SK-N-SH (cell line): ENCODE measurements at regions of chr2 and their contacts with region 1.

Region 1: DNA sequence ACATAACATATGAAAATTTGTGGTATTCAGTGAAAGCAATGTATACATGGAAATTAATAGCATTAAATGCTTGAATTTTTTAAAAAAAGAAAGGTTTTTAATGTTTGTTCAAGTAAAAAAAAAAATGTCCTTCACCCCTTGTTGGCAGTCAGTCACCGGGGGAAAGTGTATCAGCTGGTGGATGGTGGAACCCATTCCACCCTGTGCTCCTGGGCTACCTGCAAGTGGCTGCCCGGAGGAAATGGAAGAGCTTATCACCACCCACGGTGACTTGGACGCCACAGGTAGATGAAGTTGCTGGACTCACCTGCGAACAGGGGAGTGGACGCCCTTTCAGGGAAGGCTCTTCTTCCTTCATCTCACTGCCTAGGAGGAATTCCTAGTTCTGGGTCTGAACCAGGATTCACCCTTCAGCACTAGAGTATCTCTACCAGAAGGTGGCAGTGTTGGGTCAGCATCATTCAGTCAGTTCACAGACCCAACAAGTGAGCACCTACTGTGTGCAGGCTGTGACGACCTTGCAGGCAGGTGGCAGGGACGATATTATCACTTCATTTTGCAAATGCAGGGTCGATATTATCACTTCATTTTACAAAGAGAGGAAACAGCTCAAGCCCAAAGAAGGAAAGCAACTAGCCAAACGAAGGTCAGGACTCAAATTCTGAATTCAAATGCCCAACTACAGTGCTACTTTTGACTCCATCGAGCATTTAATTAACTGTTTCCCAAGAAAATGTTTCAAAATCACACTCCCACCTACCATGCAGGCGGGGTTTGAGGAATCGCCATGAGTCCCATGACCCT is 35.8 kb downstream of the CIB4 start:
- DNase-seq: peak; percentile 78
- H3K4me3 ChIP-seq: no peak overlapping the region; a peak in 1 of 4 replicates
- H3K27ac ChIP-seq: no peak overlapping the region
- H3K4me1 ChIP-seq: no peaks in the 10 kb centered on the region; a peak in 1 of 4 replicates
- H3K27me3 ChIP-seq: peaks cover 21% of the 10 kb centered on the region
- CTCF ChIP-seq: peak; percentile 94
- EP300 ChIP-seq: no peak
- RAD21 ChIP-seq: peak; percentile 99

Region 2: GRCh38 chr2:26453421-26454329 is 151.7 kb before region 1 on chr2:
- CTCF ChIA-PET with region 1: no interaction called
- POLR2A ChIA-PET with region 1: no interaction called
- DNase-seq: no peak
- H3K4me3 ChIP-seq: no peak overlapping the region
- H3K27ac ChIP-seq: no peak overlapping the region
- H3K4me1 ChIP-seq: no peaks in the 10 kb centered on the region; a peak in 1 of 4 replicates
- H3K27me3 ChIP-seq: peaks cover 10% of the 10 kb centered on the region
- CTCF ChIP-seq: no peak
- EP300 ChIP-seq: no peak
- RAD21 ChIP-seq: no peak

Region 3: DNA sequence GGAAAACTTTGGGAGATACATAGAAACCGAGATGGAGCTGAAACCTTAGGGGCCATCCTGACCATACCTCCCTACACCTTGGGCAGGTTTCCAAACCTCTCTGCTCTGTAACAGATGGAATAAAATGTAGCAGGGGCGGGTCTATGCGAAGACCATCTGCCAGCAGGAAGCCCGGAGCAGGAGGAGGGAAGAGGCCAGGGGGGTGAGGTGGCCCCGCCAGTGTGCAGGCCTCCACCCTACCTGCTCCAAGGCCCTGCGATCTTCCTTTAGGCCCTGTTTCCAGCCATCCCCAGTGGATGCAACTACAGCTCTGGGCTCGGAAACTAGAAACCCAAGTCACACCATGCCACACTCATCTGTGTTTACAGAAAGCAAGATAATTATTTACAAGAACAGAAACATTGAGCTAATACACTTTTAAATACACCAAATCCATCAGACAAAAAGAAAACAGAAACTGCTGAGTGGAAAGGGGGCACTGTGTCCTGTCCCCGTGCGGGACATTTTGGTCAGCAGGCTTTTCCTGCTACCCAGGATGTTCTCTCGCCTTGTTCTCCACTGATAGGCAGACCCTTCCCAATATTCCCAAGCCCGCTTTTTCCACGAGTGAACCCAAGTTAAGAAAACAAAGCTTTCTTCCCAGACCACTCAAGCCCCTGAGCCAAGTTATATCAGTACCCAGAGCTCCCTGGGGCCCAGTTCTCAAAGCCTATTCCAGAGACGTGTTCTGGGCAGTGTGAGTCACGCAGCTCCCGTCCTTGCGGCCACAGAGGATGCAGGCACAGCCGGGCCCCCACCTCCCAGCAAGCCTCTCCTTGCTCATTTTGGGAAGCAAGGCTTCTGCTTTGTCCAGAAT is 18.4 kb after region 1 on chr2:
- CTCF ChIA-PET with region 1: interaction called, 81 read pairs
- POLR2A ChIA-PET with region 1: no interaction called
- DNase-seq: peak; percentile 41
- H3K4me3 ChIP-seq: no peak overlapping the region
- H3K27ac ChIP-seq: no peak overlapping the region
- H3K4me1 ChIP-seq: peaks cover 0 to 3% of the 10 kb centered on the region in 2 experiments; a peak in 1 of 4 replicates
- H3K27me3 ChIP-seq: peaks cover 12% of the 10 kb centered on the region
- CTCF ChIP-seq: no peak
- EP300 ChIP-seq: no peak
- RAD21 ChIP-seq: no peak

Region 4: GRCh38 chr2:26652361-26653041 is 47.1 kb after region 1 on chr2:
- CTCF ChIA-PET with region 1: interaction called, 32 read pairs
- POLR2A ChIA-PET with region 1: no interaction called
- DNase-seq: peak; percentile 92
- H3K4me3 ChIP-seq: no peak overlapping the region
- H3K27ac ChIP-seq: peak overlapping the region in 1 of 2 experiments; percentile 82; a peak in 2 of 4 replicates
- H3K4me1 ChIP-seq: peaks cover 0 to 32% of the 10 kb centered on the region in 2 experiments; a peak in 2 of 4 replicates
- H3K27me3 ChIP-seq: peaks cover 17% of the 10 kb centered on the region; the same call in 1 of the 2 replicates
- CTCF ChIP-seq: no peak
- EP300 ChIP-seq: no peak; a peak in 1 of 4 replicates
- RAD21 ChIP-seq: no peak

Region 5: GRCh38 chr2:26692279-26692896 is 87.0 kb after region 1 on chr2 and contains the start of gene KCNK3:
- CTCF ChIA-PET with region 1: interaction called, 35 read pairs
- POLR2A ChIA-PET with region 1: no interaction called
- DNase-seq: peak; percentile 97
- H3K4me3 ChIP-seq: peak within 1 kb of the TSS; percentile 31 to 44; a peak in 3 of 4 replicates
- H3K27ac ChIP-seq: peak within 1 kb of the TSS in 1 of 2 experiments; percentile 93; a peak in 2 of 4 replicates
- H3K4me1 ChIP-seq: peaks cover 5 to 28% of the 10 kb centered on the region in 2 experiments; a peak in 1 of 4 replicates
- H3K27me3 ChIP-seq: peaks cover 43% of the 10 kb centered on the region
- CTCF ChIP-seq: no peak
- EP300 ChIP-seq: peak in 1 of 2 experiments; percentile 51; a peak in 1 of 4 replicates
- RAD21 ChIP-seq: no peak
- polyA plus RNA-seq, gene KCNK3: 0.16 and 0.31 TPM in 2 replicates

Region 6: DNA sequence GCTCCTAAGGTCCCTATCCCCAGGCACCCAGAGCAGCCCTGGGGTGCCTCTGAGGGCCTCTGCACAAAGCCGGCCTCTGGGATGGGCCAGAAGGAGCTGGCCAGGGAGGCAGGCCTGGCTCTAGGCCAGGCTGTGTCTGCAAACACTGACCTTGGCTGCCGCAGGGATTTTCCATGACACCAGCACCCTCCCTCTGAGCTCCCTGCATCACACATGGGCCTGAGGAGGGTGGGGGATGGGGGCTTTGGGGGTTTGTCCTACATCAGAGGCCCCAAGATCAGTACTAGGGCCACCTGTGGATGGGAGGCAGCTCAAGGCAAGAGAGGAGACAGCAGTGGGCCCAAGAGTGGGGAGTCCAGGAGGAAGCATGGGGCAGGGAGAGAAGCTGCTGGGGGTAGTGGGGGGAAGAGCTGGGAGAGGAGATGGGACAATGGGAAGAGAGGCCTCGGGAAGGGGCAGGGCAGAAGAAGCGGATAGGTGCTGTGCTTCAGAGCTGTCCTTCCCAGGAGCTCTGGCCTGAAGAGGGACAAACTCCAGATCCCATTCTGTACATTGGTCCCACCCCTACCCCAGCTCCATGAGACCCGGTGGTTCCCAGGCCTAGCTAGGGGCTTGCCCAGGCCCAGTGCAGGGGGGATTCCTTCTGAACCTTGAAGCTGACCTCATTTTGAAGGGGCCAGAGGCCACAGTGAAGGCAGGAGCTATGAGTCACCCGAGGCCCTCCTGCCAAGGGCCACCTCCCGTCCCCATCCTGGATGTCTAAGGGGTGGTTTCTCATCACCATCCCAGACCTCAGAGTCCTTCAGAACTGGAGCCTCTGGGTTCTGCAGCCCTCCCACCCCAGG is 115.1 kb after region 1 on chr2:
- CTCF ChIA-PET with region 1: interaction called, 70 read pairs
- POLR2A ChIA-PET with region 1: no interaction called
- DNase-seq: peak; percentile 92
- H3K4me3 ChIP-seq: no peak overlapping the region
- H3K27ac ChIP-seq: peak overlapping the region; percentile 8 to 30; a peak in 1 of 4 replicates
- H3K4me1 ChIP-seq: peaks cover 25 to 62% of the 10 kb centered on the region in 2 experiments; a peak in 3 of 4 replicates
- H3K27me3 ChIP-seq: no peaks in the 10 kb centered on the region
- CTCF ChIP-seq: no peak
- EP300 ChIP-seq: peak in 1 of 2 experiments; percentile 76; a peak in 2 of 4 replicates
- RAD21 ChIP-seq: peak; percentile 21; the same call in 1 of the 2 replicates

Region 7: GRCh38 chr2:27380626-27381545 is 775.5 kb after region 1 on chr2 and contains the start of gene ZNF513:
- CTCF ChIA-PET with region 1: no interaction called
- POLR2A ChIA-PET with region 1: no interaction called
- DNase-seq: peak; percentile 99
- H3K4me3 ChIP-seq: peak within 1 kb of the TSS; percentile 80 to 86
- H3K27ac ChIP-seq: peak within 1 kb of the TSS; percentile 68 to 95
- H3K4me1 ChIP-seq: peaks cover 15 to 53% of the 10 kb centered on the region in 2 experiments; a peak in 3 of 4 replicates
- H3K27me3 ChIP-seq: no peaks in the 10 kb centered on the region
- CTCF ChIP-seq: no peak
- EP300 ChIP-seq: no peak
- RAD21 ChIP-seq: no peak
- polyA plus RNA-seq, gene ZNF513: 53.8 and 63.7 TPM in 2 replicates